Panc1 (cell line): ENCODE measurements at regions of chr9 and their contacts with region 1.

Region 1: GRCh38 chr9:135085830-135086546 is 1.5 kb upstream of the OLFM1 start:
- DNase-seq: peak; percentile 2
- ATAC-seq: peak; percentile 66; the same call in 1 of the 2 replicates
- H3K4me3 ChIP-seq: no peak overlapping the region
- H3K27ac ChIP-seq: no peak overlapping the region
- H3K4me1 ChIP-seq: no peaks in the 10 kb centered on the region
- H3K27me3 ChIP-seq: peaks cover 2% of the 10 kb centered on the region; the same call in 1 of the 2 replicates
- CTCF ChIP-seq: peak; percentile 84

Region 2: GRCh38 chr9:135050072-135050990 is 35.7 kb before region 1 on chr9:
- CTCF ChIA-PET with region 1: no interaction called
- POLR2A ChIA-PET with region 1: no interaction called
- in situ Hi-C with region 1: no loop called
- intact Hi-C with region 1: no loop called
- DNase-seq: no peak
- ATAC-seq: no peak
- H3K4me3 ChIP-seq: no peak overlapping the region
- H3K27ac ChIP-seq: no peak overlapping the region
- H3K4me1 ChIP-seq: no peaks in the 10 kb centered on the region
- H3K27me3 ChIP-seq: peaks cover 5% of the 10 kb centered on the region; the same call in 1 of the 2 replicates
- CTCF ChIP-seq: no peak

Region 3: GRCh38 chr9:135410831-135411473 is 325.0 kb after region 1 on chr9:
- CTCF ChIA-PET with region 1: no interaction called
- POLR2A ChIA-PET with region 1: no interaction called
- in situ Hi-C with region 1: no loop called
- intact Hi-C with region 1: loop called (anchors 1 kb)
- DNase-seq: no peak
- ATAC-seq: no peak
- H3K4me3 ChIP-seq: no peak overlapping the region
- H3K27ac ChIP-seq: no peak overlapping the region
- H3K4me1 ChIP-seq: no peaks in the 10 kb centered on the region
- H3K27me3 ChIP-seq: no peaks in the 10 kb centered on the region
- CTCF ChIP-seq: no peak